B cell (primary cell): ENCODE measurements at regions of chr1 and their contacts with region 1.

Region 1: DNA sequence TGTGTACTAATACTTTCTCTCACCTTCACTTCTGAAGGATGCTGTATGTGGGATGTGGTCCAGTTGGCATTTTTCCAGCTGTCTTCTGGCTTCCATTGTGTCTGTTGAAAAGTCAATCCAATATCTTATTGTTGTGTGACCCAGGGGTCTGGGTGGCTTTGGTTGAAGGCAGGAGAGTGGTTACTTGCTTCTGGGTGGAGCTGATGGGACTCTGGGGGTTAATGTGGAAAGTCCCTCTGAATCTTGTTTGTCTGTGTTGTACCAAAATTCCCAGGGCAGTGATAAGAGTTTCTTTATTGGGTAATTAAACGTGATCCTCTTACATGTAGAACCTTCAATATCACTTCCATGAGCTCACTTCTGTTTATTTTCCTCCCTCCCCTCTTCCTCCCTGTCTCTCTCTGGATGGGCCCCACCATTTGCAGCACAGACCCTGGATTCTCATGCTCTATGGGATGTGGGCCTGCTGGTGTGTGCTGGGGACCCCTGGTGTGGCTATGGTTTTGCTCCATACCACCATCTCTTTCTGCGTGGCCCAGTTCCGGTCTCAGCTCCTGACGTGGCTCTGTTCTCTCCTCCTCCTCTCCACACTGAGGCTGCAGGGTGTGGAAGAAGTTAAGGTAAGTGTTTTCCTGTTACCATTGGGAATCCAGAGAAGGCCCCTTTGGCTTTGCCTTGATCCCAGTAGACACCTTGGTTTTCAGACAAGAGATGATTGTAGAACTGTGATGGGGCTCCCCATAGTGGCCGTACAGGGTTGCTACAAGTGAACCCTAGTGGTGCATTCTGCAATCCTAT is 71.5 kb downstream of the HHAT start:
- DNase-seq: peak; percentile 50
- ATAC-seq: peak; percentile 80
- H3K4me3 ChIP-seq: no peak overlapping the region
- H3K4me3 Mint-ChIP-seq: no peak overlapping the region
- H3K27ac ChIP-seq: no peak overlapping the region
- H3K27ac Mint-ChIP-seq: peak overlapping the region; percentile 5
- H3K4me1 ChIP-seq: no peaks in the 10 kb centered on the region
- H3K4me1 Mint-ChIP-seq: peaks cover 7% of the 10 kb centered on the region
- H3K27me3 ChIP-seq: no peaks in the 10 kb centered on the region
- H3K27me3 Mint-ChIP-seq: no peaks in the 10 kb centered on the region
- CTCF ChIP-seq: peak; percentile 74

Region 2: DNA sequence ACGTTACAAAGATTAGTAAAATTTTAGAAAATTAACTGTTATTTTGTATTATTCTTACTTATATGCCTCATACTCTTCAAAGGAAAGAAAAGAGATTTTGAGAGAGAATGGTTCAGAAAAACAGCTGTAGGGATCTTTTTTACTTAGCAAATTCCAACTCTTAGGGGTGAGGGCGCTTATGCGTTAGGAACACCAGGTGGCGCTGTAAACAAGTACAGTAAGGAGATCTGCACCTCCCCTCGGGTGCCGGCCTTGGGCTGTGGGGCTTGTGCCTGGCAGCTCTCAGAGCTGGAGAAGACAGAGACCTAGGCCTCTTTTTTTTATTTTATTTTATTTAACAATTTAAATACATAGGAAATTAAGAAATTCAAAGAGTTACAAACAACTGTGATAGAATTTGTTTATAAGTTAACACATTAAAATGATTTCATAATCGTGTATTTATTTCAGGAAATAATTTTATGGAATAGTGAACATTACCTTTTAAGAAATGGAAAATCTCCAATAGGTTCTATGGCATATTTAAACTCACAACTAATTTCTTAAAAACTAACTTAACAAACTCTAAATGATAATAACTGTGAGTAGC is 539.9 kb before region 1 on chr1:
- CTCF ChIA-PET with region 1: interaction called, 15 read pairs
- POLR2A ChIA-PET with region 1: no interaction called
- intact Hi-C with region 1: no loop called
- DNase-seq: peak; percentile 75
- ATAC-seq: peak; percentile 81
- H3K4me3 ChIP-seq: no peak overlapping the region
- H3K4me3 Mint-ChIP-seq: no peak overlapping the region
- H3K27ac ChIP-seq: no peak overlapping the region
- H3K27ac Mint-ChIP-seq: no peak overlapping the region
- H3K4me1 ChIP-seq: no peaks in the 10 kb centered on the region
- H3K4me1 Mint-ChIP-seq: no peaks in the 10 kb centered on the region
- H3K27me3 ChIP-seq: peaks cover 0 to 11% (median 3%) of the 10 kb centered on the region in 4 experiments
- H3K27me3 Mint-ChIP-seq: peaks cover 29% of the 10 kb centered on the region
- CTCF ChIP-seq: peak; percentile 97

Region 3: GRCh38 chr1:210292231-210292871 is 107.9 kb before region 1 on chr1:
- CTCF ChIA-PET with region 1: interaction called, 4 read pairs
- POLR2A ChIA-PET with region 1: no interaction called
- intact Hi-C with region 1: loop called (anchors 1 kb)
- DNase-seq: peak; percentile 31
- ATAC-seq: peak; percentile 54
- H3K4me3 ChIP-seq: peak overlapping the region in 3 of 5 experiments; percentile 25 to 46 (median 39)
- H3K4me3 Mint-ChIP-seq: peak overlapping the region; percentile 69
- H3K27ac ChIP-seq: no peak overlapping the region
- H3K27ac Mint-ChIP-seq: no peak overlapping the region
- H3K4me1 ChIP-seq: peaks cover 12 to 14% of the 10 kb centered on the region in 2 donors
- H3K4me1 Mint-ChIP-seq: peaks cover 3% of the 10 kb centered on the region
- H3K27me3 ChIP-seq: peaks cover 0 to 42% (median 23%) of the 10 kb centered on the region in 4 experiments
- H3K27me3 Mint-ChIP-seq: peaks cover 58% of the 10 kb centered on the region
- CTCF ChIP-seq: no peak

Region 4: GRCh38 chr1:210328746-210329503 is 71.3 kb before region 1 on chr1 and contains the start of gene HHAT:
- CTCF ChIA-PET with region 1: interaction called, 15 read pairs
- POLR2A ChIA-PET with region 1: interaction called, 4 read pairs
- intact Hi-C with region 1: loop called (anchors 5 kb)
- DNase-seq: peak; percentile 75
- ATAC-seq: peak; percentile 70
- H3K4me3 ChIP-seq: peak within 1 kb of the TSS; percentile 52 to 89 (median 87)
- H3K4me3 Mint-ChIP-seq: peak within 1 kb of the TSS; percentile 94
- H3K27ac ChIP-seq: peak within 1 kb of the TSS; percentile 54 to 64
- H3K27ac Mint-ChIP-seq: peak within 1 kb of the TSS; percentile 90
- H3K4me1 ChIP-seq: peaks cover 16 to 25% of the 10 kb centered on the region in 2 donors
- H3K4me1 Mint-ChIP-seq: peaks cover 39% of the 10 kb centered on the region
- H3K27me3 ChIP-seq: peaks cover 0 to 2% (median 0%) of the 10 kb centered on the region in 4 experiments
- H3K27me3 Mint-ChIP-seq: peaks cover 12% of the 10 kb centered on the region
- CTCF ChIP-seq: no peak
- total RNA-seq, gene HHAT: 26.7 and 28.2 TPM in 2 replicates

Region 5: DNA sequence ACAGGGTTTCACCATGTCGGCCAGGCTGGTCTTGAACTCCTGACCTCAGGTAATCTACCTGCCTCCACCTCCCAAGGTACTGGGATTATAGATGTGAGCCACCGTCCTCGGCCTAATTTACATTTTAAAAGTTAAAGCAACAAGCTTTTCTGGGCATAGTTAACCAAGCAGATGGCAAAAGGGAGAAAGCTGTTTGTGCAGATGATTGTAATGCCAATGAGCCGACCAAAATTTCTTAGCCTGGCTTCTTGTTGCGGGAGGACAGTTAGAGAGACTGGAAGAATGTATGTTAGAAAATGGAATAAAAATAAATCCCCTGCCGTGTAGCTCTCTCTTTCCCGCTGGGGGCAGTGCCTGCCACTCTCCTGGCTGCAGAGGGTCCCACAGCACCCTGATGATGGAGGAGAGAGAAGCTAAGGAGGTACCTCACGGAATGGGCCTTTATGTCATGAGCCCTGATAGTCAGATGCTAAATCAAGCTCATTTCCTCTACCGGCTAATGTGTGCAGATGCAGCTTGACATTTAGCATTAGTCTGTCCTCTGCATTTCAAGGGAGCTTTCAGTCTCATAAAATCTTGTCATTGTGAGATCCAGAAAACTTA is 15.7 kb after region 1 on chr1:
- CTCF ChIA-PET with region 1: interaction called, 14 read pairs
- POLR2A ChIA-PET with region 1: no interaction called
- intact Hi-C with region 1: no loop called
- DNase-seq: no peak
- ATAC-seq: no peak
- H3K4me3 ChIP-seq: no peak overlapping the region
- H3K4me3 Mint-ChIP-seq: no peak overlapping the region
- H3K27ac ChIP-seq: no peak overlapping the region
- H3K27ac Mint-ChIP-seq: no peak overlapping the region
- H3K4me1 ChIP-seq: no peaks in the 10 kb centered on the region
- H3K4me1 Mint-ChIP-seq: no peaks in the 10 kb centered on the region
- H3K27me3 ChIP-seq: no peaks in the 10 kb centered on the region
- H3K27me3 Mint-ChIP-seq: no peaks in the 10 kb centered on the region
- CTCF ChIP-seq: no peak